ENCODE measurements at regions of chr18 and their contacts with region 1.

Region 1: GRCh38 chr18:52869963-52870907 is 530.2 kb downstream of the DCC start:
- DNase-seq: no peak

Region 2: DNA sequence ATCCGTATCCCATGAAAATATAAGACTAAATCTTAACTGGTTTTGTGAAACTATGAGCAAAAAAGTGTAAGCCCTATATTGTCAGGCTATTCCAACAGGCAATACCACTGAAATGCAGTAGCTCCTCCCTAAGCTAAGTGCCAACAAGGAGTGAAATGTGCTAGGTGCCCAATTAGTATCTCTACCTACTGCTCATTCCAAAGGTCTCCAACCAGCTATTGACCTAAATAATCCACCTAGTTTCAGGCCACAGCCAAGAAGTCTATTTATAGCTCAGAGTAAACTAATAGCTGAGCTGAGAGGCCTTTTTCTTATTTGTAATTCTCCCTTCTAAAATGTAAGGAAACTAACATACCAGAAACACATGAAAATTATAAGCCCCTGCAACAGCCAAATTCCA is 48.1 kb before region 1 on chr18:
- intact Hi-C with region 1: loop called in 1 of 2 experiments (anchors 1 kb)
- DNase-seq: no peak

Region 3: DNA sequence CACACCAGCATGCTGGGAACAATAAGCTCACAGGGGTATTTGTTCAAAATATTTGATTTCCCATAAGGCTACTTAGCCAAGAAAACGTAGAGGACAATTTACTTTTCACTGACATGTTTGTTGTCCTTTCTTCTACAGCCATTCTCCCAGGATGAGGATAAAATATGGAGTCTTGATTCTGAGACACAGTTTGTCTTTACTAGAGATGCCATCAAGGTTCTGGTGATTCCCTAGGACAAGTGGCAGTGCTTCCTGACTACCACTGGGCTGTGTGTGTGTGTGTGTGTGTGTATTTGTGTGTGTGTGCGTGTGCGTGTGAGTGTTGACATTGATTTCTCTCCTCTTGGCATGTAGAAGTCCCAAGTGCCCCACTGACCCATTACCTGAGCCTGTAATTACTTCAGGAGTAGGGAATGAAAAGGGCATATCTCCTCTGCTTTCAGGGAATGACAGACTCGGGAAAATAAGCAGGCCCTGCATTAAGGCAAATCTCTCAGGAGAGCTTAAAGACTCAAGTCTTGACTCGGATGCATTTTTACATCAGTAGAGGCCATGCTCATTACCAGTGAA is 231.4 kb after region 1 on chr18:
- intact Hi-C with region 1: no loop called
- DNase-seq: no peak

Region 4: DNA sequence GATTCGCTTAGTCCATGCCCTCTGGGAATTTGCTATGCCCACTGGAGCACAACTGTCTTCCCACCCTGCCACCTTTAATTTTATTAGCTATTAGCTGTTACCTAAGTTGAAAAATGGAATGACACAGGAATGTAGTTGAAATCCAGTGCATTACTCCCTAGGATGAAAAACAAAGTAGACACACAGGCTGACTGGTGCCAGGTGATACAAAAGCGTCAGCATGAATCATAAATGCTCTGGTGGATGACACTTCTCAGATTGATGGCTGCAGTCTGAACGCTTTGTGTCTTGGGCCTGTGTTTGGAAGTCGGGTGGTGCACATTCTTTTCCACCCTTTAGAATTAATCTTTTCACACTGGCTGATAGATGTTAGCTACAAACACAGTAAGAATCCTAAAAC is 271.8 kb after region 1 on chr18:
- intact Hi-C with region 1: no loop called
- DNase-seq: no peak

Measured in posterior vena cava (tissue), 2 donors.